Activated B cell treated with CpG ODN at 0.5 μM for 24 hours (primary cell): ENCODE measurements at regions of chr14 and their contacts with region 1.

Region 1: GRCh38 chr14:51901475-51902024 is 41.1 kb downstream of the GNG2 start:
- DNase-seq: no peak
- ATAC-seq: no peak
- H3K4me3 Mint-ChIP-seq: no peak overlapping the region
- H3K27ac Mint-ChIP-seq: peak overlapping the region; percentile 5
- H3K4me1 Mint-ChIP-seq: peaks cover 49% of the 10 kb centered on the region
- H3K27me3 Mint-ChIP-seq: no peaks in the 10 kb centered on the region
- CTCF ChIP-seq: no peak

Region 2: DNA sequence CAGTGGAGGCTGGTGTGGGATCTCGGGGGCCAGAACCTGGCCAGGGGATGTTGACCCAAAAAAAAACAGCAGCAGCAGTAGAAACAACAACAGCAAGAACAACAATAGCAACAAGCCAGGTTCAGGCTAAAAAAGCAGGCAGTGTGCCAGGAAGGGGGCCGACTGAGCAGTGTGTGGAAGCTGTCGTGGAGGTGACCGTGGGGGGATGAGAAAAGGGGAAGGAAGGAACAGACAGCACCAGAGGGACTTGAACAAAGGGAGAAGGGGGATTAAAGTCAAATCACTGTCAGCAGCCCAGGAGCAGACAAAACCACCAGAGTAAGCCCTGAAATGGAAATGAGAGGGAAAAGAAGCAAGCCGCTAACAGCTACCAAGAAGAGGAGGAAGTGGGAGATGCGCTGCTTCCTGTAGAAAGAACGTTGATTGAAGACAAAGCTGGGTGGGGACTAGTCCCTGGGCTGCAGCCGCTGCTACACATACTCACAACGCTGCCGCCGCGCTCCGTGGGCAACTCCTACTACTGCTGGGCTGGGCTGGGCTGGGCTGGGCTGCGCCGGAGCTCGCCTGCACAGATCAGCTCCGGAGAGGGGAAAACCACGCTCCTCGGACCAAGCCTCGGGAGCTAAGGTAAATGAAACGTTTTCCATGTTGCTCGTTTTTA is 41.3 kb before region 1 on chr14 and contains the start of gene GNG2:
- CTCF ChIA-PET with region 1: interaction called, 7 read pairs
- POLR2A ChIA-PET with region 1: interaction called, 19 read pairs
- intact Hi-C with region 1: loop called (anchors 1 kb)
- DNase-seq: peak; percentile 58
- ATAC-seq: peak; percentile 95
- H3K4me3 Mint-ChIP-seq: peak within 1 kb of the TSS; percentile 95
- H3K27ac Mint-ChIP-seq: peak within 1 kb of the TSS; percentile 88
- H3K4me1 Mint-ChIP-seq: peaks cover 70% of the 10 kb centered on the region
- H3K27me3 Mint-ChIP-seq: no peaks in the 10 kb centered on the region
- CTCF ChIP-seq: no peak
- total RNA-seq, gene GNG2: 68.7 and 70.0 TPM in 2 replicates

Region 3: GRCh38 chr14:51880835-51881580 is 20.5 kb before region 1 on chr14:
- CTCF ChIA-PET with region 1: interaction called, 3 read pairs
- POLR2A ChIA-PET with region 1: interaction called, 16 read pairs
- intact Hi-C with region 1: no loop called
- DNase-seq: no peak
- ATAC-seq: peak; percentile 48
- H3K4me3 Mint-ChIP-seq: peak overlapping the region; percentile 19
- H3K27ac Mint-ChIP-seq: peak overlapping the region; percentile 69
- H3K4me1 Mint-ChIP-seq: peaks cover 81% of the 10 kb centered on the region
- H3K27me3 Mint-ChIP-seq: no peaks in the 10 kb centered on the region
- CTCF ChIP-seq: no peak

Region 4: DNA sequence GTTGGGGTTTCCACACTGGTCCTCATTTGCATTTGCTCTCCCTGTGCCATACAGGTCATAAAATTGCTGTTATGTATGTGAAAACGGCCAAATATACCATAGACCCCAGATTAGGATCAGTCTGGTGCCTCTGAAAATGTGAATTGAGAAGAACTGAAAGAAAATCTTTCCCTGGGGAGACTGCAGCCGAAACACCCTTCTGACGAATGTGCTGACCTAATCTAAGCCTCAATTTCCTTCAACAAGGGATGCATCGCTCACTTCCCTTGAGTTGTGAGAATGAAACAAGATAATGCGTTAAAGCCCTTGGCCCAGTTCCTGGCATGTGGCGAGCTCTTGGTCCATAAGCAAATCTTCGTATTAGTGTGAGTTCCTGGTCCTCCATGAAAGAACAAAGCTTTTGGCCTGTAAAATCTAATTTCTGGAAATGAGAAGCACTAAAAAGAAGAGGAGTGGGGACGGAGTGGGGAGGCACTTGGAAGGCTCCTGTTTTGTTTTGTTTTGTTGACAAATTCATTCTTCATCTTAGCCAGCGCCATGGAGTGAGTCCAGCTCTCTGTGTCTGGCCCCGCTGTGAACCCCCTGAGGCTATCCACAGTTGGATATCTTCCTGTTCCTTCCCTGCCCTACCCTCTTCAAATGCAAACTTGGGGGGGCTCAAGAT is 38.3 kb after region 1 on chr14:
- CTCF ChIA-PET with region 1: no interaction called
- POLR2A ChIA-PET with region 1: interaction called, 10 read pairs
- intact Hi-C with region 1: loop called (anchors 1 kb)
- DNase-seq: no peak
- ATAC-seq: peak; percentile 85
- H3K4me3 Mint-ChIP-seq: peak overlapping the region; percentile 54
- H3K27ac Mint-ChIP-seq: peak overlapping the region; percentile 85
- H3K4me1 Mint-ChIP-seq: peaks cover 31% of the 10 kb centered on the region
- H3K27me3 Mint-ChIP-seq: no peaks in the 10 kb centered on the region
- CTCF ChIP-seq: no peak

Region 5: GRCh38 chr14:51989293-51990234 is 88.0 kb after region 1 on chr14 and contains the start of gene RTRAF:
- CTCF ChIA-PET with region 1: no interaction called
- POLR2A ChIA-PET with region 1: no interaction called
- intact Hi-C with region 1: loop called (anchors 1 kb)
- DNase-seq: peak; percentile 86
- ATAC-seq: peak; percentile 97
- H3K4me3 Mint-ChIP-seq: peak within 1 kb of the TSS; percentile 98
- H3K27ac Mint-ChIP-seq: peak within 1 kb of the TSS; percentile 93
- H3K4me1 Mint-ChIP-seq: peaks cover 37% of the 10 kb centered on the region
- H3K27me3 Mint-ChIP-seq: no peaks in the 10 kb centered on the region
- CTCF ChIP-seq: no peak
- total RNA-seq, gene RTRAF: 160 and 163 TPM in 2 replicates

Region 6: DNA sequence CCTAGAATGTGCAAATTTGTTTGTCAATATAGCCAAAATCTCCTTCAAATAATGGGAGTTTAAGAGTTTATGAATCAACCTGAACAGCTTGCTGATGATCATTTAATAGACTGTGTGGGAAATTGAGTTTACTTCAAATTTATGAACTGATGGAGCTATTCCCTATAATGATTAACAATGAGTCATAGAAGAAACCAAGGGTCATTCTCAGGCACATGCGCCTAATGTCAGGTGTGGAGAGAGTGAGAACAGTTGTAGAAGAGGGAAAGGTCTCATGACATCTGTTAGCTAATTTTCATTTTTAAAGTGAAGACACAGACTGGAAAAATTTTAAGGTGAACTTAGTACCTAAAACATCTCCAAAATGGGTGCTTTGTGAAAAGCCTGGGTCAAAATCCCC is 1863.3 kb after region 1 on chr14:
- CTCF ChIA-PET with region 1: no interaction called
- POLR2A ChIA-PET with region 1: no interaction called
- intact Hi-C with region 1: no loop called
- DNase-seq: no peak
- ATAC-seq: no peak
- H3K4me3 Mint-ChIP-seq: no peak overlapping the region
- H3K27ac Mint-ChIP-seq: no peak overlapping the region
- H3K4me1 Mint-ChIP-seq: no peaks in the 10 kb centered on the region
- H3K27me3 Mint-ChIP-seq: no peaks in the 10 kb centered on the region
- CTCF ChIP-seq: no peak